SK-N-SH (cell line): ENCODE measurements at regions of chr1 and their contacts with region 1.

Region 1: GRCh38 chr1:151693076-151693651 is 23.4 kb downstream of the CELF3 start:
- DNase-seq: peak; percentile 72
- H3K4me3 ChIP-seq: no peak overlapping the region; a peak in 1 of 4 replicates
- H3K27ac ChIP-seq: no peak overlapping the region
- H3K4me1 ChIP-seq: no peaks in the 10 kb centered on the region
- H3K27me3 ChIP-seq: no peaks in the 10 kb centered on the region
- CTCF ChIP-seq: peak; percentile 73
- EP300 ChIP-seq: no peak
- RAD21 ChIP-seq: peak; percentile 89

Region 2: DNA sequence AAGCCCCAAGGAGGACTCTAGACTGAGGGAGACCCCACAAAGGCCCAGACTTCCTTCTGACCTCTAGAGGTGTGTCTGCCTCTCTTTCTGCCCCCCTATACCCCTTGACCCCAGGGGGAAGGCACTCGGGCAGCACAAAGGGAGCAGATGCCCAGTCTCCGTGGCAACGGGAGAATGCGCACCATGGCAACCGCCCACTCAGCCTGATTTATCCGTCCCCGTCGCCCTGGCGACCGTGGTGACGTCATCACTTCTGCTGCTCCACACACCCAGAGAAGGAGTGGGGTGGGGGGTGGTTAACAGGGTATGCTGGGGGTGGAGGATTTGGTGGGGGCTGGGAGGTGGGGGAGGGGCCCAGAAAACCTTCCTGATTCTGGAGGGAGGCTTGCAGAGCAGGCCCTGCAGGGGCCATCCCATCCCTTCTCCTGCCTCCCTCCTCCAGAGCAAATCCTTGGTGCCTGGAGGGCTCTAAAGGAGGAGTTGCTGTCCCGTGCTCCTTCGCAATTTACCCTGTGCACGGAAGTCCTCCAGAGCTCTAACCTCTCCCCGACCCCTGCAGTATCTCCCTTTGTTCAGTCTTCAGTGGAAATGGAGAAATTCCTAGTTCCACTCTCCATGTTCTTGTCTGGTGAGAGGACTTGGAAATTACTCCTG is 17.1 kb after region 1 on chr1:
- CTCF ChIA-PET with region 1: interaction called, 17 read pairs
- POLR2A ChIA-PET with region 1: interaction called, 3 read pairs
- DNase-seq: peak; percentile 94
- H3K4me3 ChIP-seq: no peak overlapping the region
- H3K27ac ChIP-seq: peak overlapping the region in 1 of 2 experiments; percentile 79; a peak in 2 of 4 replicates
- H3K4me1 ChIP-seq: peaks cover 0 to 42% of the 10 kb centered on the region in 2 experiments; a peak in 1 of 4 replicates
- H3K27me3 ChIP-seq: peaks cover 4% of the 10 kb centered on the region; the same call in 1 of the 2 replicates
- CTCF ChIP-seq: no peak
- EP300 ChIP-seq: peak in 1 of 2 experiments; percentile 24; a peak in 1 of 4 replicates
- RAD21 ChIP-seq: no peak

Region 3: DNA sequence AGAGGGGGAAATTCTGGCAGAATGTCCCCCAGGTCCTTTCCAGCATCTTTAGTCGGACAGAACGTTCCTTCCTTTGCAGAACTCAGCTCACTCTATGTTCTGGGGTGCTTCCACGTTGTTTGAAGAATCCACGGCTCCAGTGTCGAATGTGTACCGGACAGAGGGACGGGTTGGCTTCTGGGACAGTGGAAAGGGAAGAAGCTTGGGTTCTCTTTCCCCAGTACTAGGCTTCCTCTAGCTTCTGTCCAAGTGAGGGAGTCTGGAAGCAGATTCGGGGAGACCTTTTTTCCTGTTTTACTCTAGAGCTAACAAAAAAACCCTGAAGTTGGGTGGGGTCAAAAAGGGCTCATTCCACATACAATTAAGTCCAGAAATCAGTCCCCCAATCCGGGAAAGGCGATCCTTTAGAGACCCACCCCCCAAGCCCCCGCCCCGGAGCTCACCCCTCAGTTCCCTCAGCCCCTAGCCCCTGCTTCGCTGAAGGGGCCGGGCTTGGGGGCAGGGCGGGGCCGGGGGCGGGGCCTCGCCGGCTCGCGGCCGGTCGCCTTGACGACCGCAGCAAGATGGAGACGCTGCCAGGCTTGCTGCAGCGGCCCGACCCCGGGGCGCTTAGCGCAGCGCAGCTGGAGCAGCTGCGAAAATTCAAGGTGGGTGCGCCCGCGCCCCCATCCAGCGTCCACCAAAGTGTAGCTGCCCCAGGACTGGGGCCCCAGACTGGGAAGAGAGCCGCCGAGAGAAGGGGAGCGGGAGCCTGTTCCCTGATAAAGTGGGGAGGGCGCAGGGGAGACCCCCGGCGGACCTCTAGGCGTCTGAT is 28.0 kb after region 1 on chr1 and contains the start of gene RIIAD1:
- CTCF ChIA-PET with region 1: interaction called, 17 read pairs
- POLR2A ChIA-PET with region 1: no interaction called
- DNase-seq: peak; percentile 93
- H3K4me3 ChIP-seq: peak within 1 kb of the TSS; percentile 59 to 73
- H3K27ac ChIP-seq: peak within 1 kb of the TSS in 1 of 2 experiments; percentile 44; a peak in 2 of 4 replicates
- H3K4me1 ChIP-seq: peaks cover 0 to 36% of the 10 kb centered on the region in 2 experiments; a peak in 3 of 4 replicates
- H3K27me3 ChIP-seq: peaks cover 21% of the 10 kb centered on the region
- CTCF ChIP-seq: peak; percentile 45
- EP300 ChIP-seq: no peak
- RAD21 ChIP-seq: peak; percentile 38
- polyA plus RNA-seq, gene RIIAD1: not detected in 2 replicates

Region 4: DNA sequence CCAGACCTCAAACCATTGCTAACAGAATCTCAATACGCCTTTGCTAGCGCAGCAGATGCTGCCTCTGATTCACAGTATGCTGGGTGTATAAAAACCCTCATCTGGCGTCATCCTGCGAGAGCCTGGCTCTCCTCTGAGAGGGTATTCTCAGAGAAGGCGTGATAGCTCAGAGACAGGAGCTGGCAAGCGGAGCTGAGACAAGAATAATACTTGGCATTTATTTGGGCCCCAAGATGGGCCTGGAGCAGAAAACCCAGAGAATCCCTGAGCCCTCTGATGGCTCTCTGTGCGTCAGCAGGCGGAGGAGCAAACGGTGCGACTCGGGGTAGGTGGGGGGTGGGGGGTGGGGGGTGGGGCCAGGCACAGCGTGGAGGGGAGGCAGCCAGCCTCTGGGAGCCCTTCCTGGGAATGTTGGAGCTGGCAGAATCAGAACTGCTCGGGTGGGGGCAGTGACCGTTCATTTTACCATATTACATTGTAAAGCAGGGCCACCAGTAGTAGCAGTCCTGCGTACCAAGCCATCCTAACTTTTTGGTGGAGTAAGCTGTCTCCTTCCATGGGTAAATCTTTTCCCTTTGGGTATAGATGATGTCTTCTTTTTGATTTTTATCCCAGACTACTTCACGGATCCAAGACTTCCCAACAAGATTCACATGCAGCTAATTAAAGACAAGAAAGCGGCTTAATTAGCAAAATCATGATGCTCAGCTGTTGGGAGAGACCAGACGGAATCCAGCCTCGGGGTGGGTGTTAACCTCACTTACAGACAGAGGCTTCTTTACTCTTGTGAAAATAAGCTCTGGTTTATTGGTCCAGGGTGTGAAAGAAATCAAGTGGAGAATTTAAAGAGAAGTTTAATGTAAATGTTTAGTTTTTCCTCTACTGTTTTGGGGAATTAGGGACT is 35.2 kb after region 1 on chr1:
- CTCF ChIA-PET with region 1: interaction called, 58 read pairs
- POLR2A ChIA-PET with region 1: no interaction called
- DNase-seq: peak; percentile 77
- H3K4me3 ChIP-seq: peak overlapping the region in 1 of 2 experiments; percentile 6; a peak in 1 of 4 replicates
- H3K27ac ChIP-seq: peak overlapping the region in 1 of 2 experiments; percentile 78; a peak in 2 of 4 replicates
- H3K4me1 ChIP-seq: peaks cover 0 to 26% of the 10 kb centered on the region in 2 experiments; a peak in 2 of 4 replicates
- H3K27me3 ChIP-seq: no peaks in the 10 kb centered on the region
- CTCF ChIP-seq: no peak
- EP300 ChIP-seq: 0 out of 4 replicates have a peak, but pooled peaks of 1 of the 2 experiments have one; percentile 46
- RAD21 ChIP-seq: peak; percentile 17; the same call in 1 of the 2 replicates